Activated B cell treated with CpG ODN at 0.5 μM for 24 hours (primary cell): ENCODE measurements at regions of chr15 and their contacts with region 1.

Region 1: DNA sequence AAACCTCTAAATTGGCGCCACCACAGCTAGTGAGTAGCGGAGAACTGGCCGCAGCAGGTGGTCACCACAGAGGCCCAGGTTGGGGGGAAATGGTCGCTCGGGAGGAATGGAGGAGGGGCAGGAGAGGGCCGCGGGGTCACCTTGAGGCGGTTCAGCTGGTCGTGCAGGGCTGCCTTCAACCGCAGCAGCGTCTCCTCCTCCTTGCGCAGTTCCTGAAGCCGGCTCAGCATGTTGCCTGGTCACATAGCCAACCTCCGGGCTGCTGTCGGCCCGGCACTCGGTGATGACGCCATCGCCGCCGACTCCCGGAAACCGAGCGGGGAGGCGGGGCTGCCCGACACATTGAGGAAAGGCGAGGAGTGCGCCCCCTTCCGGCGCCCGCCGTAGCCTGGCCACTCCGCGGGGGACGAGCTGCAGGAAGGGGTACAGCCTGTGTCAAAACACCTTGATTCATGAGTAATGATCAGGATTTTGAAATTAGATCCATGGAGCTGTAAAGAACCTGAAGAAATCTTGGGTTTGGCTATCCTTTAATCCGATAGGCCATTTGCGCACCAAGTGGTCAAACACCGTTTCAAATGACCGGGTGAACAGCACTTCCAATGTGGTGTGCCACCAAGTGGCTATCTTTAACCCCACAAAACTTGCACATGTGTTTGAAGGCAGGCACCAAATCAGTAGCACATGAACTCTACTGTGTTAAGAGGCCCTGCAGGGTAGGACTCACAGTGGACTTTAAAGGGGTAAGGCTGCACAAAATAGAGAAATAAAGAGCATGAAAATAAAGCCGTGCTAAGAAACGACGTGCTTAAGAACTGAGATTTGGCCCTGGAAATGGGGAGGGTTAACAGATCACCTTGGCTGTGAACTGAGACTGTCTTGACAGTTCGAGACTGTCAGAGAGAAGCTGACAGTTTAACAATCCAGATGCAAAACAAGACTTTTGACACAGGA is at the start of gene SNAPC5:
- DNase-seq: peak; percentile 97
- ATAC-seq: peak; percentile 94
- H3K4me3 Mint-ChIP-seq: peak within 1 kb of the TSS; percentile 94
- H3K27ac Mint-ChIP-seq: peak within 1 kb of the TSS; percentile 93
- H3K4me1 Mint-ChIP-seq: peaks cover 44% of the 10 kb centered on the region
- H3K27me3 Mint-ChIP-seq: no peaks in the 10 kb centered on the region
- CTCF ChIP-seq: peak; percentile 79
- total RNA-seq, gene SNAPC5: 28.5 and 30.6 TPM in 2 replicates

Region 2: GRCh38 chr15:65610871-65611718 is 886.7 kb before region 1 on chr15 and contains the start of gene INTS14:
- CTCF ChIA-PET with region 1: no interaction called
- POLR2A ChIA-PET with region 1: interaction called, 3 read pairs
- intact Hi-C with region 1: loop called (anchors 5 kb)
- DNase-seq: peak; percentile 89
- ATAC-seq: peak; percentile 98
- H3K4me3 Mint-ChIP-seq: peak within 1 kb of the TSS; percentile 92
- H3K27ac Mint-ChIP-seq: peak within 1 kb of the TSS; percentile 91
- H3K4me1 Mint-ChIP-seq: peaks cover 35% of the 10 kb centered on the region
- H3K27me3 Mint-ChIP-seq: no peaks in the 10 kb centered on the region
- CTCF ChIP-seq: no peak
- total RNA-seq, gene INTS14: 37.6 and 41.2 TPM in 2 replicates

Region 3: DNA sequence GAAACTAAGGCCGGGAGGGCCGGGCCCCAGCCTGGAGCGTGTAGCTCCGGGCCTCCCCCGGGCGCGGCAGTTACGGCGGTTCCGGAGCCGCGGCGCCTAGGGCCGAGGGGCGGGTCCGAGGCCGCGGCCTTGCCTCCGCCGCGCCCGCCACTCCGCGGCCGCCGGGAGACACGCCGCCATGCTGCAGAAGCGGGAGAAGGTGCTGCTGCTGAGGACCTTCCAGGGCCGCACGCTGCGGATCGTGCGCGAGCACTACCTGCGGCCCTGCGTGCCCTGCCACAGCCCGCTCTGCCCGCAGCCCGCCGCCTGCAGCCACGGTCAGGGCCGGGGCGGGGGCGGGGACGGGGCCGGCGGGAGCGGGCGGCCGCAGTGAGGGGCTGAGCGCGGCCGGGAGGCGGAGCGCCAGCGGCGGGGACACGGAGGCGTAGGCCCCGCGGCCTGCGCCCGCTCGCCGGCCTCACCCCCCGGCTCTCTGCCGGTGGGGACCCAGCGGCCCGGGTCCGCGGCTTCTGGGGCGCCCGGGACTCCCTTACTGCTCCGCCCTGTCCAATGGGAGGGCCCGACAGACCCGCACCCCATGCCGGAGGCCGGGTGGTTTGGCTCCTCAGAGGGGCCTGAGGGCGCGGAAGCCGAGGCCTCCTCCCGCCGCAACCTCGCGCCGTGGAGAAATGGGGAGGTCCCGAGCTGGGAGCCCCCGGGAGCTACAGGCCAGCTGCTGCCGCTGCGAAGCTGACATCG is 204.2 kb before region 1 on chr15 and contains the start of gene DIS3L:
- CTCF ChIA-PET with region 1: interaction called, 17 read pairs
- POLR2A ChIA-PET with region 1: interaction called, 5 read pairs
- intact Hi-C with region 1: loop called (anchors 2 kb)
- DNase-seq: peak; percentile 74
- ATAC-seq: peak; percentile 82
- H3K4me3 Mint-ChIP-seq: peak within 1 kb of the TSS; percentile 82
- H3K27ac Mint-ChIP-seq: peak within 1 kb of the TSS; percentile 89
- H3K4me1 Mint-ChIP-seq: peaks cover 28% of the 10 kb centered on the region
- H3K27me3 Mint-ChIP-seq: no peaks in the 10 kb centered on the region
- CTCF ChIP-seq: no peak
- total RNA-seq, gene DIS3L: 23.8 and 27.2 TPM in 2 replicates

Region 4: GRCh38 chr15:66326051-66326450 is 171.7 kb before region 1 on chr15:
- CTCF ChIA-PET with region 1: interaction called, 3 read pairs
- POLR2A ChIA-PET with region 1: interaction called, 3 read pairs
- intact Hi-C with region 1: loop called (anchors 5 kb)
- DNase-seq: no peak
- ATAC-seq: no peak
- H3K4me3 Mint-ChIP-seq: no peak overlapping the region
- H3K27ac Mint-ChIP-seq: no peak overlapping the region
- H3K4me1 Mint-ChIP-seq: no peaks in the 10 kb centered on the region
- H3K27me3 Mint-ChIP-seq: no peaks in the 10 kb centered on the region
- CTCF ChIP-seq: no peak

Region 5: GRCh38 chr15:66356345-66357236 is 141.2 kb before region 1 on chr15 and contains the start of gene TIPIN:
- CTCF ChIA-PET with region 1: interaction called, 3 read pairs
- POLR2A ChIA-PET with region 1: interaction called, 5 read pairs
- intact Hi-C with region 1: loop called (anchors 1 kb)
- DNase-seq: peak; percentile 92
- ATAC-seq: peak; percentile 94
- H3K4me3 Mint-ChIP-seq: peak within 1 kb of the TSS; percentile 98
- H3K27ac Mint-ChIP-seq: peak within 1 kb of the TSS; percentile 95
- H3K4me1 Mint-ChIP-seq: peaks cover 24% of the 10 kb centered on the region
- H3K27me3 Mint-ChIP-seq: no peaks in the 10 kb centered on the region
- CTCF ChIP-seq: no peak
- total RNA-seq, gene TIPIN: 10.8 and 11.5 TPM in 2 replicates

Region 6: GRCh38 chr15:66386204-66387123 is 111.3 kb before region 1 on chr15 and contains the start of gene MAP2K1:
- CTCF ChIA-PET with region 1: interaction called, 67 read pairs
- POLR2A ChIA-PET with region 1: interaction called, 48 read pairs
- intact Hi-C with region 1: loop called (anchors 1 kb)
- DNase-seq: peak; percentile 97
- ATAC-seq: peak; percentile 86
- H3K4me3 Mint-ChIP-seq: peak within 1 kb of the TSS; percentile 95
- H3K27ac Mint-ChIP-seq: peak within 1 kb of the TSS; percentile 97
- H3K4me1 Mint-ChIP-seq: peaks cover 46% of the 10 kb centered on the region
- H3K27me3 Mint-ChIP-seq: no peaks in the 10 kb centered on the region
- CTCF ChIP-seq: peak; percentile 23
- total RNA-seq, gene MAP2K1: 37.9 and 42.0 TPM in 2 replicates

Region 7: DNA sequence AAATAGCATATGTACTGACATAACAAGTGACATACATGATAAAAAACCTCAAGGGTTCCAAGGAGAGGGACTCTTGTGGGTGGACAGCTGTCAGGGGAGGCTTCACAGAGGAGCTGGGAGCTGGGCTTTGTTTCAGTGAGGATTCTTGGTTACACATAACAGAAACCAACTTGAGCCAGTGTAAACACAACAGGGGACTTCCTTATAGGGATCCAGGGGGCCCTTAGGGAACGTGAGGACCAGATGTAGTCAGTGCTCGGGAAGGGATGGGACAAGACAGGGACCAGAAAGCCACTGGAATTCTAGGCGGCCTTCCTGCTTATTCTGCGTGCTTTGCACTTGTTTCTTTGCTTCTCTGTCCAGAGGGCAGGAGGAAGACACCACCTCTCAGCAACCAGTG is 35.2 kb before region 1 on chr15:
- CTCF ChIA-PET with region 1: no interaction called
- POLR2A ChIA-PET with region 1: no interaction called
- intact Hi-C with region 1: no loop called
- DNase-seq: no peak
- ATAC-seq: no peak
- H3K4me3 Mint-ChIP-seq: no peak overlapping the region
- H3K27ac Mint-ChIP-seq: no peak overlapping the region
- H3K4me1 Mint-ChIP-seq: peaks cover 11% of the 10 kb centered on the region
- H3K27me3 Mint-ChIP-seq: no peaks in the 10 kb centered on the region
- CTCF ChIP-seq: no peak

Region 8: DNA sequence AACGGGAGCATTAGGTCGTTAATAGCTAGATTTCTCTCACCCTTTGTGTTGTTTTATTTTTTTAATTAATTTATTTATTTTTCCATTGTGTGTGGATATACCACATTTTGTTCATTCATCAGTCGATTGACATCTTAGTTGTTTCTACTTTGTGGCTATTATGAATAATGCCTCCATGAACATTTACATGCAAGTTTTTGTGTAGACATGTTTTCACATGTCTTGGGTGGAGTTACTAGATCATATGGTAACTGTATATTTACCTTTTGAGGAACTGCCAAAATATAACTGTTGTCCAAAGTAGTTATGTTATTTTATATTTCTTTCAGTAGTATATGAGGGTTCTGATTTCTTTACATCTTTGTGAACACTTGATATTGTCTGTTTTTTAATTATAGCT is 26.1 kb after region 1 on chr15:
- CTCF ChIA-PET with region 1: no interaction called
- POLR2A ChIA-PET with region 1: no interaction called
- intact Hi-C with region 1: no loop called
- DNase-seq: no peak
- ATAC-seq: no peak
- H3K4me3 Mint-ChIP-seq: no peak overlapping the region
- H3K27ac Mint-ChIP-seq: no peak overlapping the region
- H3K4me1 Mint-ChIP-seq: no peaks in the 10 kb centered on the region
- H3K27me3 Mint-ChIP-seq: no peaks in the 10 kb centered on the region
- CTCF ChIP-seq: no peak